K562 (cell line): ENCODE measurements at regions of chr5 and their contacts with region 1.

Region 1: DNA sequence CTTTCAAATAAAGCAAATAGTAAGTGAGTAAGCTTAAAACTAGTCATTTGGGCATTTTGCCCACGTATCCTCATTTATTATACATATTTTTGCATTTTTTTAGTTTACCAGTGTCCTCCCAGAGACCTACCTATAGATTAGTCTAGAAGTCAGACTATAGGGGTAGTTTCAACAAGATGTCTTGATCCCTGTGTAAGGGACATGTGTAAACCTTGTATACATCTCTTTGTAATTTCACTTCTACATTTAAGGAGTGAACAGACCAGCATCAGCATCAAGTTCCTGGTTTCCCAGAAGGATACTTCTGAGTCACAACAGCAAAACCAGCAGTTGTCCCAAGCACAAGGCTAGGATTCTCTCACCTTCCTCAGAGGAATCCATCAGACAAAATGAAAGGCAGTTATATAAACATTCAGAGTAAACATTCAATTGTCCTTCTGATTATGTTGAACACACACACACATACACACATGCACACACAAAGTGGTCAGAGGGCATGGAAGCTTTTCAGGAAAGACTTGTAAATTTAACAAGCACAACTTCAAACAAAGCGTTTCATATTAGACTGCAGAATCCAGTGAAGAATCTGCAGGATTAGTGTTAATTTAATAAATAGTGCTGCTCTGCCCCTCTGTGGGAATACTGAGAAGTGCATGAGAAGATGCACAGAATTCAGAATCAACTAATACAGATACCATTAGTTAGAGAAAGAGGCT is 55.4 kb downstream of the HINT1 start:
- DNase-seq: peak; percentile 18 to 47 (median 31)
- ATAC-seq: peak; percentile 87
- H3K4me3 ChIP-seq: no peak overlapping the region
- H3K27ac ChIP-seq: no peak overlapping the region
- H3K4me1 ChIP-seq: no peaks in the 10 kb centered on the region; a peak in 1 of 5 replicates
- H3K27me3 ChIP-seq: no peaks in the 10 kb centered on the region
- CTCF ChIP-seq: peak; percentile 53 to 80 (median 63); a peak in 5 of 6 replicates
- EP300 ChIP-seq: no peak
- POLR2A ChIP-seq: no peak
- RAD21 ChIP-seq: peak; percentile 79 to 92

Region 2: DNA sequence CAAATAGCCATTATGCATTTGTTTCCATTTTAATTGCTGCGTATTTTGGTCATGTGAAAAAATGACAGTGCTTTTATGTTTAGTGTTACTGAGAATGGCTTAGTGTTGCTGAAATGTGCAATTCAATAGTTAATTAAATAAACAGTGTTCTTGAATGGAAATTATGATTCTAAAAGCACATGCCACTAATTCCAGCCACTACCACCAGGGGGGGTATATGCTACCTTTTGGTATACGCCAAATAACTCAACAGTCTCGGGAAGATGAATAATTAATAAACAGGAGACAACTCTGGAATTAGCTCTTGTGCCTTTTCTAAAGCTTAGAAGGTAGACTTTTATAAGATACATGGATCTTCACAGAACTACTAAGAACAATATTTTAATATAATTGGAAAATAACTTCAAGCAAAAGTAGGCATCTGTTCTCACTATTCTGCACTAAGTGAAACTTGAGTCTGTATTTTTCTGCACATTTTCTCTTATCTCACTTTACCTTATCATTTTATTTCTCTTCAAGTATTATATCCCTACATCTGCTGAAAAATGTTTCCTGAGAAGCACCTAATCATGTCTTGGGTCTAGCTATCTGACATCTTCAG is 1445.3 kb before region 1 on chr5:
- CTCF ChIA-PET with region 1: no interaction called
- POLR2A ChIA-PET with region 1: no interaction called
- in situ Hi-C with region 1: no loop called
- intact Hi-C with region 1: loop called (anchors 5 kb)
- DNase-seq: peak; percentile 8 to 29 (median 26)
- ATAC-seq: no peak
- H3K4me3 ChIP-seq: no peak overlapping the region
- H3K27ac ChIP-seq: no peak overlapping the region
- H3K4me1 ChIP-seq: no peaks in the 10 kb centered on the region
- H3K27me3 ChIP-seq: no peaks in the 10 kb centered on the region
- CTCF ChIP-seq: peak; percentile 19 to 46 (median 44); a peak in 4 of 6 replicates
- EP300 ChIP-seq: no peak
- POLR2A ChIP-seq: no peak
- RAD21 ChIP-seq: peak in 1 of 2 experiments; percentile 37; a peak in 2 of 4 replicates

Region 3: GRCh38 chr5:129852747-129853352 is 1256.8 kb before region 1 on chr5:
- CTCF ChIA-PET with region 1: no interaction called
- POLR2A ChIA-PET with region 1: interaction called, 3 read pairs
- in situ Hi-C with region 1: no loop called
- intact Hi-C with region 1: loop called (anchors 5 kb)
- DNase-seq: peak; percentile 59 to 73 (median 70)
- ATAC-seq: peak; percentile 87
- H3K4me3 ChIP-seq: no peak overlapping the region
- H3K27ac ChIP-seq: no peak overlapping the region
- H3K4me1 ChIP-seq: no peaks in the 10 kb centered on the region
- H3K27me3 ChIP-seq: no peaks in the 10 kb centered on the region
- CTCF ChIP-seq: peak; percentile 53 to 74 (median 65)
- EP300 ChIP-seq: no peak
- POLR2A ChIP-seq: no peak
- RAD21 ChIP-seq: peak; percentile 31 to 64; a peak in 2 of 4 replicates

Region 4: GRCh38 chr5:130017173-130017572 is 1092.5 kb before region 1 on chr5:
- CTCF ChIA-PET with region 1: no interaction called
- POLR2A ChIA-PET with region 1: no interaction called
- in situ Hi-C with region 1: no loop called
- intact Hi-C with region 1: no loop called
- DNase-seq: no peak
- ATAC-seq: no peak
- H3K4me3 ChIP-seq: no peak overlapping the region
- H3K27ac ChIP-seq: no peak overlapping the region
- H3K4me1 ChIP-seq: no peaks in the 10 kb centered on the region
- H3K27me3 ChIP-seq: no peaks in the 10 kb centered on the region
- CTCF ChIP-seq: no peak
- EP300 ChIP-seq: no peak
- POLR2A ChIP-seq: no peak
- RAD21 ChIP-seq: no peak

Region 5: DNA sequence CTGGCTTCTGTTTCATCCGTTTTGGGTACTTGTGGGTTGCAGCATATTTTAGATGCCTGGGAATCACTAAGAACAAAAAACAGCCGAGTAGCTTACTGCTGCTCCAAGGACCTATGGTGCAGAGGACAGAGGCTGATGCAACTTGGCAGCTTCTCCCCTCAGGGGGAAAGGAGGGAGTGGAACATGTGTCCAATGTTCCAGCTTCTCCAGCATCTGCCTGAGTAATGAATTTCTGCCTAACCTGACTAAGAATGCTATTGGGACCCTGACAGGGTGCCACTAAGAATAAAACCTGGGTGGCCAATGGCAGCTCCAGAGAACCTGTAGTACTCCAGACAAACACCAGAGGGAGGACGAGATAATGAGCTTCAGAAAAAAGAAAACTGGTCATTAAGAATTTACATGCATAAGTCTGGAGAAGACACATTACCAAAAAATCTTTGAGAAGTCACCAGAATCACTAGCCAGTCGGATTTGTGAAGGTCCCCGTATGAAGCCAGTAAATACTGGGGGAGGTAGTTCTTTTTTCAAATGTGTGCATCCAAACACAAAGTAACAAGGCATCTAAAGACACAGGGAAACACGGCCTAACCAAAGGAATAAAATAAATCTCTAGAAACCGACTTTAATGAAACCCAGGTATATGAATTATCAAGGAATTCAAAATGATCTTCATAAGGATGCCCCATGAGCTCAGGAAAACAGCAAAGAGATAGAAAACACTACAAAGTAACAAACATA is 238.2 kb before region 1 on chr5:
- CTCF ChIA-PET with region 1: interaction called, 3 read pairs
- POLR2A ChIA-PET with region 1: no interaction called
- in situ Hi-C with region 1: no loop called
- intact Hi-C with region 1: loop called (anchors 2 kb)
- DNase-seq: peak; percentile 46 to 52 (median 48)
- ATAC-seq: peak; percentile 81
- H3K4me3 ChIP-seq: no peak overlapping the region
- H3K27ac ChIP-seq: no peak overlapping the region
- H3K4me1 ChIP-seq: no peaks in the 10 kb centered on the region
- H3K27me3 ChIP-seq: no peaks in the 10 kb centered on the region
- CTCF ChIP-seq: peak; percentile 50 to 71 (median 66)
- EP300 ChIP-seq: no peak
- POLR2A ChIP-seq: no peak
- RAD21 ChIP-seq: peak; percentile 53 to 76

Region 6: GRCh38 chr5:131382407-131383395 is 273.0 kb after region 1 on chr5:
- CTCF ChIA-PET with region 1: no interaction called
- POLR2A ChIA-PET with region 1: no interaction called
- in situ Hi-C with region 1: no loop called
- intact Hi-C with region 1: loop called (anchors 5 kb)
- DNase-seq: peak; percentile 58 to 86 (median 72)
- ATAC-seq: peak; percentile 90
- H3K4me3 ChIP-seq: no peak overlapping the region
- H3K27ac ChIP-seq: peak overlapping the region; percentile 26; the same call in 2 of the 3 replicates
- H3K4me1 ChIP-seq: peaks cover 10 to 67% of the 10 kb centered on the region in 2 experiments
- H3K27me3 ChIP-seq: no peaks in the 10 kb centered on the region
- CTCF ChIP-seq: peak; percentile 74 to 90 (median 82)
- EP300 ChIP-seq: peak; percentile 75
- POLR2A ChIP-seq: 0 out of 2 replicates have a peak, but pooled peaks have one; percentile 21
- RAD21 ChIP-seq: peak; percentile 80 to 93

Region 7: GRCh38 chr5:131394128-131394527 is 284.4 kb after region 1 on chr5:
- CTCF ChIA-PET with region 1: no interaction called
- POLR2A ChIA-PET with region 1: no interaction called
- in situ Hi-C with region 1: no loop called
- intact Hi-C with region 1: no loop called
- DNase-seq: no peak
- ATAC-seq: no peak
- H3K4me3 ChIP-seq: no peak overlapping the region
- H3K27ac ChIP-seq: no peak overlapping the region
- H3K4me1 ChIP-seq: no peaks in the 10 kb centered on the region
- H3K27me3 ChIP-seq: no peaks in the 10 kb centered on the region
- CTCF ChIP-seq: no peak
- EP300 ChIP-seq: no peak
- POLR2A ChIP-seq: no peak
- RAD21 ChIP-seq: no peak